ENCODE measurements at regions of chrX and their contacts with region 1.

Region 1: GRCh38 chrX:46912098-46912602 is at the start of gene JADE3:
- DNase-seq: peak; percentile 76
- ATAC-seq: peak; percentile 73
- H3K4me3 ChIP-seq: peak within 1 kb of the TSS; percentile 33 to 70 (median 66)
- H3K4me3 Mint-ChIP-seq: peak within 1 kb of the TSS; percentile 93
- H3K27ac ChIP-seq: peak within 1 kb of the TSS in 1 of 2 donors; percentile 36
- H3K27ac Mint-ChIP-seq: peak within 1 kb of the TSS; percentile 78
- H3K4me1 ChIP-seq: peaks cover 5 to 22% of the 10 kb centered on the region in 2 donors
- H3K4me1 Mint-ChIP-seq: peaks cover 28% of the 10 kb centered on the region
- H3K27me3 ChIP-seq: no peaks in the 10 kb centered on the region
- H3K27me3 Mint-ChIP-seq: no peaks in the 10 kb centered on the region
- CTCF ChIP-seq: no peak
- total RNA-seq, gene JADE3: 22.2 and 23.4 TPM in 2 replicates

Region 2: GRCh38 chrX:46376246-46376885 is 535.8 kb before region 1 on chrX:
- CTCF ChIA-PET with region 1: no interaction called
- POLR2A ChIA-PET with region 1: no interaction called
- intact Hi-C with region 1: no loop called
- DNase-seq: no peak
- ATAC-seq: no peak
- H3K4me3 ChIP-seq: no peak overlapping the region
- H3K4me3 Mint-ChIP-seq: no peak overlapping the region
- H3K27ac ChIP-seq: no peak overlapping the region
- H3K27ac Mint-ChIP-seq: no peak overlapping the region
- H3K4me1 ChIP-seq: no peaks in the 10 kb centered on the region
- H3K4me1 Mint-ChIP-seq: peaks cover 2% of the 10 kb centered on the region
- H3K27me3 ChIP-seq: no peaks in the 10 kb centered on the region
- H3K27me3 Mint-ChIP-seq: peaks cover 3% of the 10 kb centered on the region
- CTCF ChIP-seq: no peak

Region 3: DNA sequence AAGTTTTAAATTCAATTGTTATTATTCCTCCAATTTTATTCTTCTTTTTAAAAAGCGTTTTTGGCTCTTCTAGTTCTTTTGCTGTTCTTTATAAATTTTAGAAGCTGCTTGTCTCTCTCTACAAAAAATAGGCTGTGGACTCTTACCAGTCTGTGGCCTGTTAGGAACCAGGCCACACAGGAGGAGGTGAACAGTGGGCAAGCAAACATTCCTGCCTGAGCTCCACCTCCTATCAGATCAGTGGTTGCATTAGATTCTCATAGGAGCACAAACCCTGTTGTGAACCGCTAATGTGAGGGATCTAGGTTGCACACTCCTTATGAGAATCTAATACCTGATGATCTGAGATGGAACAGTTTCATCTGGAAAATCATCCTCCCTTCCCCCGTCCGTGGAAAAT is 23.1 kb after region 1 on chrX:
- CTCF ChIA-PET with region 1: interaction called, 6 read pairs
- POLR2A ChIA-PET with region 1: no interaction called
- intact Hi-C with region 1: loop called (anchors 2 kb)
- DNase-seq: no peak
- ATAC-seq: no peak
- H3K4me3 ChIP-seq: no peak overlapping the region
- H3K4me3 Mint-ChIP-seq: peak overlapping the region; percentile 69
- H3K27ac ChIP-seq: no peak overlapping the region
- H3K27ac Mint-ChIP-seq: peak overlapping the region; percentile 82
- H3K4me1 ChIP-seq: peaks cover 4 to 16% of the 10 kb centered on the region in 2 donors
- H3K4me1 Mint-ChIP-seq: peaks cover 41% of the 10 kb centered on the region
- H3K27me3 ChIP-seq: no peaks in the 10 kb centered on the region
- H3K27me3 Mint-ChIP-seq: no peaks in the 10 kb centered on the region
- CTCF ChIP-seq: no peak

Region 4: DNA sequence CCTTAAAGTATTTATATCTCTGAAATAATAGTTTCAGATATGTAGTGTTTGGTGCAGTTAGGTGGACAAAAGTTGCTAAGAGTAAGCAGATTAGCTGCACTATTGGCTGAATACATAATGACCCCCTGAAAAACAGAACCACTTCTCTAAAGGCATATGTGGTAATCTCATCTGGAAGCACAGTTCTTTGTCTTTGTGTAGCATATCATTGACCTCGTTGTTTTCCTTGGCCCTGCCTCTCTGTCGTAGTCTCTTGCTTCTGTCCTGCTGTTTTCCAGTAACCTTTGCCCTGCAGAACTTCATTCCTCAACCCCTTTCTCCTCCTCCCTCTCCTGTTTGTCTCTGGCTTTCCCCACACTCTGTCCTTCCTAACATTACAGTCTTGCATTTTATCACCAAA is 41.4 kb after region 1 on chrX:
- CTCF ChIA-PET with region 1: no interaction called
- POLR2A ChIA-PET with region 1: no interaction called
- intact Hi-C with region 1: loop called (anchors 5 kb)
- DNase-seq: peak; percentile 36
- ATAC-seq: peak; percentile 54
- H3K4me3 ChIP-seq: peak overlapping the region in 1 of 5 experiments; percentile 31
- H3K4me3 Mint-ChIP-seq: peak overlapping the region; percentile 76
- H3K27ac ChIP-seq: peak overlapping the region; percentile 65 to 74
- H3K27ac Mint-ChIP-seq: peak overlapping the region; percentile 85
- H3K4me1 ChIP-seq: peaks cover 33 to 53% of the 10 kb centered on the region in 2 donors
- H3K4me1 Mint-ChIP-seq: peaks cover 64% of the 10 kb centered on the region
- H3K27me3 ChIP-seq: no peaks in the 10 kb centered on the region
- H3K27me3 Mint-ChIP-seq: no peaks in the 10 kb centered on the region
- CTCF ChIP-seq: no peak

Region 5: DNA sequence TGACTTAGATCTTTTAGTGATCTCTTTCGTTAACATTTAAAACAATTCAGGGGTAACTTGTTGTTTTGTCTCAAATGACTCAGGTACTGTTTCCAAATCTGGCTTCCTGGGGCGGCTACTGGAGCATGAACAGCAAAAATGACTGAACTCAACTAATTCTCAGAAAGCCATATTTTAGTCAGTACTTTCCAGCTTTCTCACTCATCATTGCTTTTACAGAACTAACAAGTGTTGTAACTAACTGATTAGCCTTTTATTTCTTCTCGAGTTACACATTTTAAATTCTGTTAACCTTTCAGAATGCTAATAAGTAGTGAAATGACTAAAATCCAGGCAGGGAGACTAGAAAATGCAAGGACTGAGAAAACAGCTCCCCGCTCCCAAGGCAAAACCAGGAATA is 55.4 kb after region 1 on chrX:
- CTCF ChIA-PET with region 1: interaction called, 12 read pairs
- POLR2A ChIA-PET with region 1: interaction called, 3 read pairs
- intact Hi-C with region 1: loop called (anchors 2 kb)
- DNase-seq: peak; percentile 50
- ATAC-seq: peak; percentile 44
- H3K4me3 ChIP-seq: no peak overlapping the region
- H3K4me3 Mint-ChIP-seq: peak overlapping the region; percentile 86
- H3K27ac ChIP-seq: peak overlapping the region; percentile 58 to 84
- H3K27ac Mint-ChIP-seq: peak overlapping the region; percentile 96
- H3K4me1 ChIP-seq: peaks cover 61 to 73% of the 10 kb centered on the region in 2 donors
- H3K4me1 Mint-ChIP-seq: peaks cover 76% of the 10 kb centered on the region
- H3K27me3 ChIP-seq: no peaks in the 10 kb centered on the region
- H3K27me3 Mint-ChIP-seq: no peaks in the 10 kb centered on the region
- CTCF ChIP-seq: no peak

Region 6: DNA sequence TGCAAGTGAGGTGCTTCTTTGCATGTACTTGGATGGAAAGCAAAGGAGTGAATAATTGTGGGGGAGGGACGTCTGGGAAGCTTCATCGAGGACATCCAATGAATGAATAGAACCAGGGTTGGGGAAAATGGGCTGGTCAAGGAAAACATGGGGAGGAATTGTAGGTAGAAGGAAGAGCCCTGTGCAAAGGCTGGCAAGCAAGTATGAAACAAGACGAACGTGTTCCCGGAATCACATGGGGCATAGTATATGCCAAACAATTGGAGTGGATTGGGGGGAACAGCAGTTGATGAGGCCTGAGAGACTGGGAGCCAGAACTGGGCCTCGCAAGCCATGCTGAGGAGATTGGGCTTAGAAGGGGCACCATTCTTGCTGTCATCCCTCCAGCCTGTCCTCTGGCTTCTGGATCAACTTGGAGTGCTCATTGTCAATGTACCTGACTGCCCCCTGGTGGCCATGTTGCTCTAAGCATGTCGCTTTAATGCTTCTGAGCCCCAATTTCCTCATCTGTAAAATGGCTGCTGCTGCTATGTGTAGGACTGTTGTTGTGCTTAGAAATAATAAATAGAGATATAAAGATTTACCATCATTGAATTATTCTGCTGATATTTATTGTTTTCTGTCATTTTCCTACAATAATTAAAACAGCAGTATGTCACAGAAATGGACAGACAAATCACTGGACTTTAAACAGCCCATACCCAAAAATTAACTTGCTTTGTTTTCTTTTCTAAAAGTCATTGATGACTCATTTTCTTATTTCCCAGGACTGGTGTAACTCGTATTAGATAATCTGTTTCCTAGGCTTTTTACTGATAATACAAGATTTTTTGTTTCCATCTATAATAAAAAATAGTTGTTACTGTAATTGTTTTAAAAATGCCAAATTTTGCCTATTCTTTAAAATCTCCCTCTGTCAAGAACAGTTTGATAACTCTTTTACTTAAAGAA is 66.5 kb after region 1 on chrX:
- CTCF ChIA-PET with region 1: interaction called, 24 read pairs
- POLR2A ChIA-PET with region 1: no interaction called
- intact Hi-C with region 1: loop called (anchors 1 kb)
- DNase-seq: peak; percentile 82
- ATAC-seq: peak; percentile 84
- H3K4me3 ChIP-seq: no peak overlapping the region
- H3K4me3 Mint-ChIP-seq: no peak overlapping the region
- H3K27ac ChIP-seq: no peak overlapping the region
- H3K27ac Mint-ChIP-seq: peak overlapping the region; percentile 1
- H3K4me1 ChIP-seq: peaks cover 9 to 15% of the 10 kb centered on the region in 2 donors
- H3K4me1 Mint-ChIP-seq: peaks cover 26% of the 10 kb centered on the region
- H3K27me3 ChIP-seq: no peaks in the 10 kb centered on the region
- H3K27me3 Mint-ChIP-seq: no peaks in the 10 kb centered on the region
- CTCF ChIP-seq: peak; percentile 67

Measured in B cell (primary cell).